ENCODE measurements at regions of chr3 and their contacts with region 1.

Region 1: DNA sequence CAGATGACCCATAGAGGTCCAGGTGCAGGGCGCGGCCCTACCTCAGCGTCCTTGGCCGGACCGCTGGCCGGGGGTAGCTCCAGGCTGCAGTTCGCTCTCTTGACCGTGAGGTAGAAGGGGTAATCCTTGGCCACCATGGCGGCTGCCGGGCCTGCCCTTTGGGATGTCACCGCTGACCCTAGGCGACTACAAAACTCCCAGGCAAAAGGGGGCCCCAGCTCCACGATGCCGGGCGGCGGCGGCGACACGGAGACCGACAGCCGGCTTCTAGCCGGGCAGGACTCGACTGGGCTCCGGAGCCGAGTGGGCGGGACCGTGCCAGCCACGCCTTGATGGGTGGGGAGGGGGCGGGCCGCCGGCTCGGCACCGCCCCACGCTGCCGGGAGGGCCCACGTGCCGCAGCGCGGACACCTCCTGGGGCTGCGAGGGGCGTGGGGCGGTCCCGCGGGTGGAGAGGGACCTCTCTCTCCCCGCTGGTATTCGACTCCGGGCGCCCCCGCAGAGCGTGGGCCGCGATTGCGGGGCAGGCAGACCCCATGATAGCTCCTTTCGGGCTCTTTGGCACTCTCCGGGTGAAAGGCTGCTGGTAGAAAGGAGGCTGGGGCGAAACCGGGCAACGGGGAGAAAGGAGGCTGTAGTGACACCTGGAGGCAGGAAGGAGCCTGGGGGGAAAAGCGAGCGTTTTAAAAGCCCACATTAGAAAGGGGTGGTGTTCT is at the start of gene ARHGEF3:
- DNase-seq: no peak
- ATAC-seq: peak; percentile 91
- H3K4me3 ChIP-seq: peak within 1 kb of the TSS; percentile 71
- H3K27ac ChIP-seq: peak within 1 kb of the TSS; percentile 54
- H3K4me1 ChIP-seq: peaks cover 6% of the 10 kb centered on the region
- H3K27me3 ChIP-seq: no peaks in the 10 kb centered on the region
- CTCF ChIP-seq: peak; percentile 70 to 81 (median 75)
- EP300 ChIP-seq: no peak
- POLR2A ChIP-seq: peak; percentile 77
- RAD21 ChIP-seq: peak; percentile 67
- polyA plus RNA-seq, gene ARHGEF3: 21.8 to 31.1 TPM

Region 2: DNA sequence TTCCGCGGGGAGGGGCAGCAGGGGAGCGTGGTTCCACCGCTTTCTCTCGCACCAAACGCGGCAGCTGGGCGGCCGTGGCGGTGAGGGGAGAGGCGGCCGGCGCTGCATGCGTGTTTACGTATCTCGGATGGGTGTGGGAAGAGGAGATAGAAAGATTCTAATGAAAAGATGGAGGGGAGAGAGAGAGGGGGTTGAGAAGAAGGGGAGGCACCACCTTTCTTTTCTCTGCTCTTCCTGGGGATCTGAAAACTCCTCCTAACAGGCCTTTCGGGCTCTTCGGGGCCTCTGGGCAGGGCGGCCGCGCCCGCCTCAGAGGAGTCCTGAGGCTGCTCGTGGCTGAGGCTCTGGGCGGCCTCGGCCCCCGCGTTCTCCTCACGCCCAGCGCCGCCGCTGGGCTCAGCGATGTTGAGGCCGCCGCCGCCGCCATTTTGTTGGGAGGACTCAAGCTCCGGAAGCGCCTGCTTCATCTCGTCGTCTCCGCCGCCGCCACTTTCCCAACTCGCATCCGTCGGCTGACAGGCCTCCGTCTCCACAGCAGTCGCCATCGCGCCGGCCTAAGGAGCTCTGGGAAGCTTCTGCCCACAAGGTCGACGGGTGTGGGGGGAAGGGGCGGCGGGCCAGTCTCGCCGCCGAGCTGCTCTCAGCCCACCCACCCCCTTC is 119.2 kb before region 1 on chr3:
- CTCF ChIA-PET with region 1: interaction called, 15 read pairs
- POLR2A ChIA-PET with region 1: interaction called, 15 read pairs
- RAD21 ChIA-PET with region 1: interaction called, 21 read pairs
- SMC1A ChIA-PET with region 1: interaction called, 9 read pairs
- in situ Hi-C with region 1: no loop called
- intact Hi-C with region 1: no loop called
- DNase-seq: peak; percentile 48
- ATAC-seq: peak; percentile 83
- H3K4me3 ChIP-seq: peak overlapping the region; percentile 94
- H3K27ac ChIP-seq: peak overlapping the region; percentile 98
- H3K4me1 ChIP-seq: peaks cover 3% of the 10 kb centered on the region
- H3K27me3 ChIP-seq: no peaks in the 10 kb centered on the region
- CTCF ChIP-seq: no peak
- EP300 ChIP-seq: 0 out of 4 replicates have a peak, but pooled peaks of 1 of the 2 experiments have one; percentile 11
- POLR2A ChIP-seq: peak; percentile 84
- RAD21 ChIP-seq: no peak

Region 3: DNA sequence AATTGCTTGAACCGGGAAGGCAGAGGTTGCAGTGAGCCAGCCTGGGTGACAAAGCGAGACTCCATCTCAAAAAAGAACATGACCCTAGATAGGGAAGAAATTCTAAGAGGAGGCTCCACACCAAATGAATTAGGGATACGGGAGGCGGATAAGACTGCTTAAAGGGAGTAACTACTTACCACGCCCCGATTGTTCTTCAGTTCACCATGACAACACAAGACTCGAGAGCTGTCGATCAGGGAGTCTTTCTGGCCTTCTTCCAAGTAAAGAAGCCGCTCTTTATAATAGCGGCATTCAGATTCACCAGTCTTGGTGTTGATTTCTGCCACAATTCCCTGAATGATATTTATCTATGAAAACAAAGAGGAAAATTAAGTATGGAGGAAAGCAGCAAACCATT is 64.8 kb before region 1 on chr3:
- CTCF ChIA-PET with region 1: interaction called, 108 read pairs
- POLR2A ChIA-PET with region 1: interaction called, 3 read pairs
- RAD21 ChIA-PET with region 1: interaction called, 10 read pairs
- SMC1A ChIA-PET with region 1: interaction called, 383 read pairs
- in situ Hi-C with region 1: no loop called
- intact Hi-C with region 1: no loop called
- DNase-seq: no peak
- ATAC-seq: no peak
- H3K4me3 ChIP-seq: no peak overlapping the region
- H3K27ac ChIP-seq: no peak overlapping the region
- H3K4me1 ChIP-seq: no peaks in the 10 kb centered on the region
- H3K27me3 ChIP-seq: no peaks in the 10 kb centered on the region
- CTCF ChIP-seq: no peak
- EP300 ChIP-seq: no peak
- POLR2A ChIP-seq: no peak
- RAD21 ChIP-seq: no peak

Region 4: GRCh38 chr3:56775838-56776555 is 25.8 kb before region 1 on chr3:
- CTCF ChIA-PET with region 1: interaction called, 160 read pairs
- POLR2A ChIA-PET with region 1: interaction called, 14 read pairs
- RAD21 ChIA-PET with region 1: interaction called, 245 read pairs
- SMC1A ChIA-PET with region 1: interaction called, 383 read pairs
- in situ Hi-C with region 1: no loop called
- intact Hi-C with region 1: no loop called
- DNase-seq: no peak
- ATAC-seq: no peak
- H3K4me3 ChIP-seq: no peak overlapping the region
- H3K27ac ChIP-seq: no peak overlapping the region
- H3K4me1 ChIP-seq: peaks cover 30% of the 10 kb centered on the region
- H3K27me3 ChIP-seq: no peaks in the 10 kb centered on the region
- CTCF ChIP-seq: no peak
- EP300 ChIP-seq: no peak
- POLR2A ChIP-seq: no peak
- RAD21 ChIP-seq: no peak

Region 5: DNA sequence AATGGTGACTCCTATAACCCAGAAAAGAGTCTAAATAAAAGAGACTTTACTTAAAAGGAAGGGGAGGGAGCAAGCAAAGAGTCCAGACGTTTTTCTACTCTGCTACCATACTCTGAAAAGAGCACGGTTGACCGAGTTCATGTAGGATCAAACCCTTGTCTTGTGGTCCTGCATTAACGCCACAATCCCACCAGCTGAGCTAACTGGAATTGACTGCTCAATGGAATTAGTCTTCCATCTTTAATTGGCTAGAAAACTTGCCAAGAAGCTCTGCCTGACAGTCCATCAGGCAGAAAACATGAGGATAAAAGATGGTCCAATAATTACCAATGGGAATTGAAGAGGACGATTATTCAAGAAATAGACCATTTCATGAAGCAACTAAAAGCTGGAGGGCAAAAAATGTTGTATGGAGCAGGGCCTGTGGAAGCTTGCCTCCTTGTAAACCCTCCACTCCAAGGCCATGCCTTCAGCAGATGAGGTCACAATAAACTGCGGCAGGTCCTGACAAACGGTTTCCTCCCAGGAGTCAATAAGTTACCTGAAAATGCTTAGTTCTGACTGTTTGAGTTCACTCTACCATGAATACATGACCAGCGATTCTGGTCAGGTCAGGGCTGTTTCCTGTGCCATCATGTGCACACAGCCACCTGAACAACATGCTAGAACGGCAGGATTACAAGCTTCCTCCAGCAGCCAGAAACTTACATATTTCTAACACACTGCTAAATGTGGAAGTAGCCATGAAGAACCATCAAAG is 35.6 kb after region 1 on chr3:
- CTCF ChIA-PET with region 1: interaction called, 8 read pairs
- POLR2A ChIA-PET with region 1: no interaction called
- RAD21 ChIA-PET with region 1: interaction called, 29 read pairs
- SMC1A ChIA-PET with region 1: interaction called, 11 read pairs
- in situ Hi-C with region 1: no loop called
- intact Hi-C with region 1: no loop called
- DNase-seq: peak; percentile 21
- ATAC-seq: peak; percentile 98
- H3K4me3 ChIP-seq: no peak overlapping the region
- H3K27ac ChIP-seq: no peak overlapping the region
- H3K4me1 ChIP-seq: peaks cover 7% of the 10 kb centered on the region
- H3K27me3 ChIP-seq: no peaks in the 10 kb centered on the region
- CTCF ChIP-seq: no peak
- EP300 ChIP-seq: 0 out of 4 replicates have a peak, but pooled peaks of 1 of the 2 experiments have one; percentile 16
- POLR2A ChIP-seq: no peak
- RAD21 ChIP-seq: no peak

Region 6: DNA sequence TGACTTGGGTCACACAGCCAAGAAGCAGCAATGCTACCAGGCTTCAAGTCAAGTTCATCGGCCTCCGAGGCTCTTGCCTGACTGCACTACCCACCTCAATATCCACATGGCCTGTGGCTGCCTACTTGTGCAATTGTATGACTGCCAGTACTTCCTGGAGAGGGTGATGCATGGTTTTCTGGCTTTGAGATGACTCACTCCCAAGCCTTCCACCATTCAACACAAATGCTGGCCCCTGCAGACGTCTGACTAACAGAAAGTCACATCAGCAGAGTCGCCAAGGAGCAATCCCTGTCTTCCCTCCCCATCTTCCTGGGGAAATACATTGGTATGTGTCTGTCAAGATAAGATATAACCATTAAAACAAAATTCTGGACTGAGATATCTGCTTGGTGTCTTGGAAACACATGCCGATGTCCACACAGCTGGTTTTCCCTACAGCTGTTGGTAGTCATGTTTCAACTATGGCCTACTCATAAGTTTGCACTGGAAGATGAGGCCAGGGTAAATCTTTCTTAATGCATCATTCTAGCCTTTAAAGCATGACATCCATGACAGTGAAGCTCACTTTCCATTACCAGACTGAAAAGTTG is 179.1 kb after region 1 on chr3:
- CTCF ChIA-PET with region 1: interaction called, 220 read pairs
- POLR2A ChIA-PET with region 1: interaction called, 5 read pairs
- RAD21 ChIA-PET with region 1: interaction called, 206 read pairs
- SMC1A ChIA-PET with region 1: interaction called, 166 read pairs
- in situ Hi-C with region 1: no loop called
- intact Hi-C with region 1: no loop called
- DNase-seq: no peak
- ATAC-seq: no peak
- H3K4me3 ChIP-seq: no peak overlapping the region
- H3K27ac ChIP-seq: no peak overlapping the region
- H3K4me1 ChIP-seq: no peaks in the 10 kb centered on the region
- H3K27me3 ChIP-seq: no peaks in the 10 kb centered on the region
- CTCF ChIP-seq: no peak
- EP300 ChIP-seq: no peak
- POLR2A ChIP-seq: no peak
- RAD21 ChIP-seq: no peak

Measured in GM12878 (cell line).